Activated CD4-positive, alpha-beta T cell treated with anti-CD3 and anti-CD28 coated beads, Interleukin-2, amount 10 ng/mL, durations not matched to agents 24 days and 14 days (primary cell): ENCODE measurements at regions of chr4 and their contacts with region 1.

Region 1: GRCh38 chr4:107552306-107552705 is 167.7 kb downstream of the PAPSS1 start:
- DNase-seq: no peak
- H3K4me3 Mint-ChIP-seq: no peak overlapping the region
- H3K27ac Mint-ChIP-seq: no peak overlapping the region
- H3K4me1 Mint-ChIP-seq: no peaks in the 10 kb centered on the region
- H3K27me3 Mint-ChIP-seq: no peaks in the 10 kb centered on the region

Region 2: DNA sequence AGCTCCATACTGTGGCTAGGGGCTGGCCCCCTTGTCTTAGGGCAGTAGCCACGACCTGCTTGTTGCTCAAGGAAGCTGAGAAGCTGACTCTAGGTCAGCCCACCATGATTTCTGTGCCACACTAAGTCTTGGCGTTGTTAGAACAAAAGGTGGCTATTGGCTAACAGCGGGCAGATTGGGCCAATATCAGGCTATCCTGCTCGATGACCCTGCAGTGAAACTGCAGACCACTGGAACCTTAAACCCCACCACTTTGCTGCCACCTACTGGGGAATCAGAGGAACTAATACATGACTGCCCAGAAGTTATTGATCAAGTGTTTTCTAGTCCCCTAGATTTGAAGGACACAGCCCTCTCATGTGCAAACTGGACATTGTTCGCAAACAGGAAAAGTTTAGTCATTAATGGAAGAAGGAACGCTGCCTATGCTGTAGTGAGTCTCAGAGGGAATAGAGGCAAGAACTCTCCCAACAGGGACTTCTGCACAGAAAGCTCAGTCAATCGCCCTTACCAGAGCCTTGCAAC is 184.7 kb after region 1 on chr4:
- intact Hi-C with region 1: loop called (anchors 5 kb)
- DNase-seq: peak; percentile 78
- H3K4me3 Mint-ChIP-seq: no peak overlapping the region
- H3K27ac Mint-ChIP-seq: no peak overlapping the region
- H3K4me1 Mint-ChIP-seq: no peaks in the 10 kb centered on the region
- H3K27me3 Mint-ChIP-seq: no peaks in the 10 kb centered on the region